K562 (cell line): ENCODE measurements at regions of chr11 and their contacts with region 1.

Region 1: DNA sequence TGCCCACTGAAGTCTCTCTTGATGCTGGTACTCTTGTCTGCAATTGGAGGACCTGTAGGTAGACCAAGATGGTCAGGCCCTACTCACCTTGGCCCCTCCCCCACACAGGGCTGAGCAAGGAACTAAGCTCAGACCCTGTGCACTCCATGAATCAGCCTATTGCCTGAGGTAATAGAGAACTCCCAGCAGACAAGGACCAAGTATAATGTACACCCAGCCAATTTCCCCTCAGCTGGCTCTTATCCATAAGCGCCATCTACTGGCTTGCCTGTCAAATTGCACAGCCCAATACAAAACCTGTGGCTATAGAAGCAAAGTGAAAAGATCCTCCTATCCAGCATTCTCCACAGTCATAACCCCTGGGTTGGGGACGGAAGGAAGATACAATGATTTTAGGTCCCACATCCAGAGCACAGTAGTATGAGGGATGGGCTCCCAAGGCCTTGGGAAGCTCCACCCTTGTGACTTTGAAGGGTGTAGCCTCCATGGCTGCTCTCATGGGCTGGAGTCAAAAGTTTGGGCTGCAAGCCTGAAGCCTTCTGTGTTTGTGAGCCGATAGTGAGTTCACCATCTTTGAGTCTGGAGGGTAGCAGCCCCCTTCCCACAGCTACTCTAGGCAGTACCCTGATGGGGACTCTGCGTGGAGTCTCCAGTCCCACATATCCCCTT is 56.0 kb downstream of the GLYATL2 start:
- DNase-seq: peak; percentile 52 to 79 (median 60)
- ATAC-seq: peak; percentile 96
- H3K4me3 ChIP-seq: no peak overlapping the region
- H3K27ac ChIP-seq: no peak overlapping the region
- H3K4me1 ChIP-seq: peaks cover 0 to 8% of the 10 kb centered on the region in 2 experiments; a peak in 4 of 5 replicates
- H3K27me3 ChIP-seq: no peaks in the 10 kb centered on the region
- CTCF ChIP-seq: peak; percentile 92 to 97 (median 93)
- EP300 ChIP-seq: no peak
- POLR2A ChIP-seq: no peak
- RAD21 ChIP-seq: peak; percentile 97

Region 2: GRCh38 chr11:58579192-58580129 is 209.0 kb before region 1 on chr11:
- CTCF ChIA-PET with region 1: interaction called, 15 read pairs
- POLR2A ChIA-PET with region 1: interaction called, 6 read pairs
- in situ Hi-C with region 1: no loop called
- intact Hi-C with region 1: loop called (anchors 1 kb)
- DNase-seq: peak; percentile 74 to 95 (median 78)
- ATAC-seq: peak; percentile 72
- H3K4me3 ChIP-seq: peak overlapping the region; percentile 87
- H3K27ac ChIP-seq: peak overlapping the region; percentile 98
- H3K4me1 ChIP-seq: peaks cover 12 to 18% of the 10 kb centered on the region in 2 experiments
- H3K27me3 ChIP-seq: no peaks in the 10 kb centered on the region
- CTCF ChIP-seq: peak; percentile 68 to 85 (median 74)
- EP300 ChIP-seq: peak; percentile 54; the same call in 1 of the 2 replicates
- POLR2A ChIP-seq: peak; percentile 88
- RAD21 ChIP-seq: no peak

Region 3: GRCh38 chr11:58654079-58654907 is 134.2 kb before region 1 on chr11:
- CTCF ChIA-PET with region 1: interaction called, 19 read pairs
- POLR2A ChIA-PET with region 1: interaction called, 3 read pairs
- in situ Hi-C with region 1: no loop called
- intact Hi-C with region 1: loop called (anchors 1 kb)
- DNase-seq: peak; percentile 57 to 81 (median 60)
- ATAC-seq: peak; percentile 97
- H3K4me3 ChIP-seq: no peak overlapping the region
- H3K27ac ChIP-seq: no peak overlapping the region
- H3K4me1 ChIP-seq: no peaks in the 10 kb centered on the region
- H3K27me3 ChIP-seq: no peaks in the 10 kb centered on the region
- CTCF ChIP-seq: peak; percentile 83 to 93 (median 92)
- EP300 ChIP-seq: no peak
- POLR2A ChIP-seq: no peak
- RAD21 ChIP-seq: peak; percentile 86 to 95

Region 4: DNA sequence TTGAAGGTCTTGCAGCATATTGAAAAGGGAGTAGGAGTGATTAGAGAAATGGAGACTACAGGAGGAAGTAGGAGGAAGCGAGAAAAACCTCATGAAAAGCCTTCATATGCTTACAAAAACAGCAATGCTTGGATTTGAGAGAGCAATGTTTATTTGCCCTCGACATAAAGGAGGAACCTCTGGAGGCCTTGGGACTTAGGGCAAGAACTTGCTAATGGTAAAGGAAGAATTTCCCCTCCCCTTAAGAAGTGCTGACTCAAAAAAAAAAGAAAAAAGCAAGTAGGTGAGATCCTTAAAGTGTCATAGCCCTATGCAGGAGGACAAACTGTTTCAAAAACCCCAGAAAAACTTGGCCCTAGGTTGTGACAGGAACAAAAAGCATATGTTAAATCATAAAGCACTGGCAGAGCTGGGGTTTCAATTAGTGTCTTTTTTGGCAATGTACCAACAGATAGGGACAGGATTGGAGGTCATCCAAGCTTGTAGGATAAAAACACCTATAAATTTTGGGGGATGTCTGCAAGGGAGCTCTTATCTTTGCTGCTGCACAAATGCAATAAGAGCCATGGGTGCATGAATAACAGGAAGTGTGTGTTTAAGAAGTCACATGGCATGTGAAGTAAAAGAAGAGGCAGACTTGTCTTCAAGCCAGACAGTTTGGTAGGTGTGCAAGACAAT is 61.6 kb before region 1 on chr11:
- CTCF ChIA-PET with region 1: no interaction called
- POLR2A ChIA-PET with region 1: no interaction called
- in situ Hi-C with region 1: no loop called
- intact Hi-C with region 1: loop called (anchors 5 kb)
- DNase-seq: peak in 2 of 4 experiments; percentile 58 to 80
- ATAC-seq: peak; percentile 76
- H3K4me3 ChIP-seq: no peak overlapping the region
- H3K27ac ChIP-seq: peak overlapping the region; percentile 66; the same call in 2 of the 3 replicates
- H3K4me1 ChIP-seq: peaks cover 0 to 25% of the 10 kb centered on the region in 2 experiments; a peak in 3 of 5 replicates
- H3K27me3 ChIP-seq: no peaks in the 10 kb centered on the region
- CTCF ChIP-seq: no peak
- EP300 ChIP-seq: peak; percentile 85
- POLR2A ChIP-seq: no peak
- RAD21 ChIP-seq: no peak

Region 5: GRCh38 chr11:58805065-58805464 is 16.6 kb after region 1 on chr11:
- CTCF ChIA-PET with region 1: no interaction called
- POLR2A ChIA-PET with region 1: no interaction called
- in situ Hi-C with region 1: no loop called
- intact Hi-C with region 1: no loop called
- DNase-seq: no peak
- ATAC-seq: no peak
- H3K4me3 ChIP-seq: no peak overlapping the region
- H3K27ac ChIP-seq: no peak overlapping the region
- H3K4me1 ChIP-seq: no peaks in the 10 kb centered on the region
- H3K27me3 ChIP-seq: no peaks in the 10 kb centered on the region
- CTCF ChIP-seq: no peak
- EP300 ChIP-seq: no peak
- POLR2A ChIP-seq: no peak
- RAD21 ChIP-seq: no peak

Region 6: DNA sequence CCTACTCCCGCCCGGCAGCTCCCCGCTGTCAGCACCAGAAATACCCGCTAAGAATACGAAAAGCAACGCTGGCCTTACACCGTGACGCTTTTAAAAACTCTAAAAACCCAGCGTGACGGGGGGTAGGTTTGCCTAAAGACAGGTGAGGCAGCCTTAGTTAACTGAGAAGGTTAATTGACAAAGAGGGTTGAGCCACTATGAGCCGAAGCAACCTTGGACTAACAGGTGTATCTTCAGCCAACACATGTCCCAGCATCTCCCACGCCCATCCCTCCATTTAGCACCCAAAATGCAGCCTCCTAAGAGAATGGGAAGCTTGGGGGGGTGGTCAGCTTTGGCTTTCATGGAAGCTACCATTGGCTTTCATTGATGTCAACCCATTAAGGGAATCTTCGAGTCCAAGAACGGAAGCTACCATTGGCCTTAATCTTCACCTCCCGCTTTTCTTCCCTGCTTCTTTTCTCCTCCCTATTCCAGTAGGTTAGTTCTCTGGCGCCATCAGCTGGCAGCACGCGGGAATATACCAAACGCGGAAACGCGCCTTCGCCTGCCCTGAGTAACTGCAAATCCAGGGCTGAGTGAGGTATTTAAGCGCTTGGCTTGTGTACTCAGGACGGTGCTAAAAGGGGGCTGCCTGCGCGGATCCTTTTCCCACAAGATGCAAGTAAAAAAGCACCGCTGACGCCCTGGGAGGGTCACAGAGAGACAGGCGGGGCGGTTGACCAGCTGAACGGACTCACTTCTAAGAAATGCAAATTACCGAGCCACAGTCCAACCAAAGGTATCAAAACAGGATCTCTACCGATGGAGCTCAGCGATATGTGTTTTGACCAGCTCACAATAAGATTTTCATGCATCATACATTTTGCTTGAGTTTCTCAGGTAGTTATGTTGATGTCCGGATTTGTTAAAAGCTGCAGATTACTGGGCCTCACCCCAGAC is 112.3 kb after region 1 on chr11:
- CTCF ChIA-PET with region 1: no interaction called
- POLR2A ChIA-PET with region 1: interaction called, 3 read pairs
- in situ Hi-C with region 1: no loop called
- intact Hi-C with region 1: loop called (anchors 2 kb)
- DNase-seq: peak; percentile 59 to 82 (median 72)
- ATAC-seq: peak; percentile 98
- H3K4me3 ChIP-seq: no peak overlapping the region
- H3K27ac ChIP-seq: no peak overlapping the region
- H3K4me1 ChIP-seq: peaks cover 0 to 5% of the 10 kb centered on the region in 2 experiments; a peak in 2 of 5 replicates
- H3K27me3 ChIP-seq: peaks cover 3 to 7% of the 10 kb centered on the region in 2 experiments; a peak in 2 of 5 replicates
- CTCF ChIP-seq: peak; percentile 73 to 88 (median 86)
- EP300 ChIP-seq: no peak
- POLR2A ChIP-seq: no peak
- RAD21 ChIP-seq: peak; percentile 87 to 89